HCT116 (cell line): ENCODE measurements at regions of chr17 and their contacts with region 1.

Region 1: GRCh38 chr17:48194097-48194550 is 86.6 kb downstream of the SNX11 start:
- DNase-seq: peak; percentile 89
- ATAC-seq: peak; percentile 87
- H3K4me3 ChIP-seq: peak overlapping the region in 1 of 2 experiments; percentile 5; a peak in 1 of 4 replicates
- H3K27ac ChIP-seq: peak overlapping the region; percentile 74
- H3K4me1 ChIP-seq: peaks cover 32 to 82% of the 10 kb centered on the region in 2 experiments
- H3K27me3 ChIP-seq: no peaks in the 10 kb centered on the region
- CTCF ChIP-seq: no peak
- POLR2A ChIP-seq: no peak
- RAD21 ChIP-seq: no peak

Region 2: DNA sequence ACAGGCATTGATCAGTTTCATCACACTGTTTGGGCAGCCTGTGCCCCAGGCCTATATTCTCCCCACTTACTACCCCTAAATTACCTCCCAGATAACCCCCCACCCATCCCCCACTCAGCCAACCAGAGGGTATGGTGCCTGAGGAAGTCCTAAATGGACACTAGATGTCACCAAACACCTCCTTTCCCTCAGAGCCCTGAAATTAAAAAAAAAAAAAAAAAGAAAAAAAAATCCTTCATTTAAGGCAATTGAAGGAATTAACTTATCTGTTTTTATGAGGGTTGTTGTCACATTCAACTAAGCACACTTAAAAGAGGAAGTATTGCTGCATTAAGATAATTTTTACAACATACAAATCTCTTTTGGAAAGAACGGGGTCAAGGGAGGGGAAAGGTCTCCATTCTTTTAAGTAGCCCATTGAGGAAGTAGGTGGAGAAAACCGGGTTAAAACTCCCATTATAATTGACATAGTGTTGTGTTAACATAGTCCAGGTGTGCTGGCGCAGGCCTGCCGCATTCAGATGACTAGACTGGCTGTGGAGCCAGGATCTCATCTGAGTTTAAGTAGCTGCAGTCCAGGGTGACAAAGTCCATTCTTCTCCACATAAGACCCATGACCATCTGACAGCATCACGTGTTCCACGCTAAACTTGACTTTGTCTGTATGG is 40.3 kb before region 1 on chr17:
- CTCF ChIA-PET with region 1: no interaction called
- POLR2A ChIA-PET with region 1: no interaction called
- RAD21 ChIA-PET with region 1: no interaction called
- intact Hi-C with region 1: no loop called
- DNase-seq: peak; percentile 45
- ATAC-seq: peak; percentile 95
- H3K4me3 ChIP-seq: no peak overlapping the region
- H3K27ac ChIP-seq: no peak overlapping the region
- H3K4me1 ChIP-seq: peaks cover 3 to 6% of the 10 kb centered on the region in 2 experiments; a peak in 3 of 4 replicates
- H3K27me3 ChIP-seq: peaks cover 25% of the 10 kb centered on the region; the same call in 1 of the 2 replicates
- CTCF ChIP-seq: peak; percentile 80 to 87 (median 83)
- POLR2A ChIP-seq: no peak
- RAD21 ChIP-seq: peak; percentile 86

Region 3: GRCh38 chr17:48181653-48182052 is 12.5 kb before region 1 on chr17:
- CTCF ChIA-PET with region 1: interaction called, 10 read pairs
- POLR2A ChIA-PET with region 1: no interaction called
- RAD21 ChIA-PET with region 1: no interaction called
- intact Hi-C with region 1: no loop called
- DNase-seq: peak; percentile 44
- ATAC-seq: peak; percentile 96
- H3K4me3 ChIP-seq: no peak overlapping the region
- H3K27ac ChIP-seq: no peak overlapping the region
- H3K4me1 ChIP-seq: no peaks in the 10 kb centered on the region
- H3K27me3 ChIP-seq: no peaks in the 10 kb centered on the region
- CTCF ChIP-seq: peak; percentile 73 to 86 (median 83); a peak in 5 of 6 replicates
- POLR2A ChIP-seq: no peak
- RAD21 ChIP-seq: peak; percentile 88

Region 4: DNA sequence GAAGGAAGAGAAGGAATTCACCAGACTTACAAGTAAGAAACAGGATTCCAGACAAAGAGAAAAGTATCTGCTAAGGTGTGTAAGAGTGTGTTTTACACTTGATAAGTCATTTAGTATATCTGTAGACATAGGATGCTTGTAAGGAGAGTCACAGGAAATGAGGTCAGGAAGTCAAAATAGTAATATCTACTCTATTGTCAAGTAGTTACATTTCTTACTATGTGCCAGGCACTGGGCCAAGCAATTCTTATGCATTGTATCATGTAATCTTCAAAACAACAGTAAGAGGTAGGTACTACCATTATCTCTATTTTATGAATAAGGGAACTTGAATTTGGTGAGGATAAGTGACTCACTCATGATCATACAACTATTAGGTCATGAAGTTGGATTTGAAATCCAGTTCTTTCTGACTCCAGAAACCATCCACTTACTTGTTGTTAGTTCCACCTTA is 42.6 kb after region 1 on chr17:
- CTCF ChIA-PET with region 1: no interaction called
- POLR2A ChIA-PET with region 1: no interaction called
- RAD21 ChIA-PET with region 1: no interaction called
- intact Hi-C with region 1: no loop called
- DNase-seq: peak; percentile 91
- ATAC-seq: peak; percentile 47
- H3K4me3 ChIP-seq: peak overlapping the region in 1 of 2 experiments; percentile 0; a peak in 1 of 4 replicates
- H3K27ac ChIP-seq: peak overlapping the region; percentile 38; the same call in 1 of the 2 replicates
- H3K4me1 ChIP-seq: peaks cover 51 to 78% of the 10 kb centered on the region in 2 experiments
- H3K27me3 ChIP-seq: no peaks in the 10 kb centered on the region
- CTCF ChIP-seq: no peak
- POLR2A ChIP-seq: no peak
- RAD21 ChIP-seq: no peak